ENCODE measurements at regions of chr15 and their contacts with region 1.

Region 1: DNA sequence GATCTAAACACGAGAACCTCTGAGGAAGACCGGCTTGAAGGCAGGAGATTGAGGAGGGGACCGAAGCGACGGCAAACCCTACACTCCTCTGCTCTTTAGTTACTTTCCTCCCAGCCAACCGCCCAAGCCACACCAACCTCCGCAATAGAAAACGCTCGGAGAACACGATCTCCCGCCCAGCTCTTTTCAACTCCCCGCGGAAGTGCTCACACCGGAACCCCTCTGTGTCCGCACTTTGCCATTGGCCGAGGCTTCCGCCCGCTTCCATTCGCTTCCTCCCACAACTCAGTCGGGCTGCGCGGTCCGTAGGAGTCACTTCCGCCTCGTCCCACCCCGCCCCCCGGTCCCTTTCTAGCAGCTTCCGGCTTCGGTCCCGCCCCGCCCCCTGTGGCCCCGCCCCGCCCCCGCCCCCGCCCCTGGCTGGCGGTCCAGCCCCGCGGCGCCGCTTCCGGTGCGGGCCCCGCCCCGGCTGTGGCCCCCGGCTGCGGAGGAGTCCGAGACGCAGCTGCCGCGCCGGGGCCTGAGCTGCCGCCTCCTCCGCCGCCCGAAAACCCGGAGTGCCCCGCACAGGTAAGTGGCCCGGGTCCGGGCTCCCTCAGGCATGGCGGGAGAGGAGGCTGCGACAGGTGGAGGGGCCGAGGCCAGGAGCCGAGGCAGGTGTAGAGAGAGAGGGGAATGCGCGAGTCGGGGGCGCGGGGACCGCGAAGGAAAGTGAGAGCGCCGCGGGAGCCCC is at the start of gene ARID3B:
- DNase-seq: peak; percentile 89 to 98 (median 95)
- ATAC-seq: peak; percentile 82
- H3K4me3 ChIP-seq: peak within 1 kb of the TSS; percentile 88
- H3K4me3 Mint-ChIP-seq: peak within 1 kb of the TSS; percentile 99
- H3K27ac ChIP-seq: peak within 1 kb of the TSS; percentile 66 to 81
- H3K27ac Mint-ChIP-seq: peak within 1 kb of the TSS; percentile 98
- H3K4me1 ChIP-seq: peaks cover 39% of the 10 kb centered on the region
- H3K4me1 Mint-ChIP-seq: peaks cover 55% of the 10 kb centered on the region
- H3K27me3 ChIP-seq: no peaks in the 10 kb centered on the region
- H3K27me3 Mint-ChIP-seq: no peaks in the 10 kb centered on the region
- CTCF ChIP-seq: no peak
- total RNA-seq, gene ARID3B: 35.2 to 38.7 TPM

Region 2: GRCh38 chr15:73991726-73992593 is 549.0 kb before region 1 on chr15 and contains the start of gene STOML1:
- CTCF ChIA-PET with region 1: no interaction called
- POLR2A ChIA-PET with region 1: no interaction called
- intact Hi-C with region 1: loop called (anchors 2 to 10 kb)
- DNase-seq: peak; percentile 88 to 97 (median 96)
- ATAC-seq: peak; percentile 79
- H3K4me3 ChIP-seq: peak within 1 kb of the TSS; percentile 62 to 88
- H3K4me3 Mint-ChIP-seq: peak within 1 kb of the TSS; percentile 100
- H3K27ac ChIP-seq: peak within 1 kb of the TSS; percentile 53
- H3K27ac Mint-ChIP-seq: peak within 1 kb of the TSS; percentile 73
- H3K4me1 ChIP-seq: peaks cover 42% of the 10 kb centered on the region
- H3K4me1 Mint-ChIP-seq: peaks cover 48% of the 10 kb centered on the region
- H3K27me3 ChIP-seq: no peaks in the 10 kb centered on the region
- H3K27me3 Mint-ChIP-seq: no peaks in the 10 kb centered on the region
- CTCF ChIP-seq: peak; percentile 95
- total RNA-seq, gene STOML1: 2.5 to 4.8 TPM

Region 3: GRCh38 chr15:74433592-74434262 is 107.2 kb before region 1 on chr15 and contains the start of gene SEMA7A:
- CTCF ChIA-PET with region 1: interaction called, 4 read pairs
- POLR2A ChIA-PET with region 1: no interaction called
- intact Hi-C with region 1: loop called in 1 of 2 experiments (anchors 1 kb)
- DNase-seq: peak; percentile 49 to 91 (median 72)
- ATAC-seq: peak; percentile 81
- H3K4me3 ChIP-seq: peak within 1 kb of the TSS; percentile 56 to 68
- H3K4me3 Mint-ChIP-seq: peak within 1 kb of the TSS; percentile 80
- H3K27ac ChIP-seq: peak within 1 kb of the TSS; percentile 23 to 73
- H3K27ac Mint-ChIP-seq: peak within 1 kb of the TSS; percentile 57
- H3K4me1 ChIP-seq: peaks cover 16% of the 10 kb centered on the region
- H3K4me1 Mint-ChIP-seq: peaks cover 40% of the 10 kb centered on the region
- H3K27me3 ChIP-seq: no peaks in the 10 kb centered on the region
- H3K27me3 Mint-ChIP-seq: no peaks in the 10 kb centered on the region
- CTCF ChIP-seq: no peak
- total RNA-seq, gene SEMA7A: 8.8 to 9.4 TPM

Region 4: DNA sequence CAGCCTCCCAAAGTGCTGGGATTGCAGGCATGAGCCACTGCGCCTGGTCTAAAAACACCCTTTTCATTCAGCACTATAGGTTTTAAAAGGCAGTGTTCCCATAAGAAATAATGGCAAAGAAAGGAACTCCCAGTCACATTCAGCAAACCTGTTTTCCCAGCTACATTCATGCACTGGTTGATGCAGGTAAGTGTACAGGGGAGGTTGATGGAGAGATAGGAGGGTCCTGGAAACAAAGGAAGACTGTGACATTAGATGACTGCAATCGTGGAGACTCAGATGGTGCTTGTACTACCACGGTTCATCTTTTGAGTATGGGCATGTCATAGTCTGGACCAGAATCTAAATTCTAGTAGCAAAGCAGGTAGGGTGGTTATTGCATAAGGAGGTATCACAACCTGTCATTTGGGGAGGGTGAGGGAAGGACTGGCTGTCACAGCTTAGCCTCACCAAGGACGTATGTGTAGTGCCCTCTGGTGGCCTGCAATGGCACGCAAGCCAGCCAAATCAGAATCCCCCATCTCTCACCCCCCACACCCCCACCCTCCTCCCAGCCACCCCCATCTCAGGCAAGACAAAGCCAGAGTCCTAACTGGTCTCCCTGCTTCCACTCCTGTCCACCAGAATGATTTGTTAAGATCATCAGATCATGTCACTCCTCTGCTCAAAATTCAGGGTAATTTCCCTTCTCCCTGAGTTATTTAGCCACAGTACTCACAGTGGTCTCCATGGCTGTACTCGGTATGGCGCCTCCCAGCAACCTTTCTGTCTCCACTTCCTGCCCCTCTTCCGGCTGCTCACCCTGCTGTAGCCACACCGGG is 51.2 kb before region 1 on chr15:
- CTCF ChIA-PET with region 1: interaction called, 4 read pairs
- POLR2A ChIA-PET with region 1: no interaction called
- intact Hi-C with region 1: loop called in 1 of 2 experiments (anchors 5 kb)
- DNase-seq: peak; percentile 58 to 90 (median 79)
- ATAC-seq: peak; percentile 93
- H3K4me3 ChIP-seq: peak overlapping the region; percentile 14 to 18
- H3K4me3 Mint-ChIP-seq: peak overlapping the region; percentile 65
- H3K27ac ChIP-seq: peak overlapping the region in 1 of 2 experiments; percentile 55
- H3K27ac Mint-ChIP-seq: peak overlapping the region; percentile 83
- H3K4me1 ChIP-seq: peaks cover 19% of the 10 kb centered on the region
- H3K4me1 Mint-ChIP-seq: peaks cover 22% of the 10 kb centered on the region
- H3K27me3 ChIP-seq: no peaks in the 10 kb centered on the region
- H3K27me3 Mint-ChIP-seq: no peaks in the 10 kb centered on the region
- CTCF ChIP-seq: peak; percentile 59

Region 5: GRCh38 chr15:74695597-74696397 is 154.9 kb after region 1 on chr15 and contains the start of gene EDC3:
- CTCF ChIA-PET with region 1: no interaction called
- POLR2A ChIA-PET with region 1: no interaction called
- intact Hi-C with region 1: loop called (anchors 1 to 2 kb)
- DNase-seq: peak; percentile 72 to 94 (median 89)
- ATAC-seq: peak; percentile 88
- H3K4me3 ChIP-seq: peak within 1 kb of the TSS; percentile 79 to 93
- H3K4me3 Mint-ChIP-seq: peak within 1 kb of the TSS; percentile 100
- H3K27ac ChIP-seq: peak within 1 kb of the TSS; percentile 80 to 83
- H3K27ac Mint-ChIP-seq: peak within 1 kb of the TSS; percentile 99
- H3K4me1 ChIP-seq: peaks cover 14% of the 10 kb centered on the region
- H3K4me1 Mint-ChIP-seq: peaks cover 47% of the 10 kb centered on the region
- H3K27me3 ChIP-seq: peaks cover 0 to 1% of the 10 kb centered on the region in 2 experiments
- H3K27me3 Mint-ChIP-seq: no peaks in the 10 kb centered on the region
- CTCF ChIP-seq: no peak
- total RNA-seq, gene EDC3: 9.8 to 11.8 TPM

Region 6: GRCh38 chr15:74776821-74777768 is 236.2 kb after region 1 on chr15:
- CTCF ChIA-PET with region 1: no interaction called
- POLR2A ChIA-PET with region 1: no interaction called
- intact Hi-C with region 1: no loop called
- DNase-seq: peak in 7 of 9 experiments; percentile 50 to 93 (median 70)
- ATAC-seq: peak; percentile 22
- H3K4me3 ChIP-seq: peak overlapping the region; percentile 9 to 31
- H3K4me3 Mint-ChIP-seq: peak overlapping the region; percentile 77
- H3K27ac ChIP-seq: peak overlapping the region; percentile 43 to 92
- H3K27ac Mint-ChIP-seq: peak overlapping the region; percentile 92
- H3K4me1 ChIP-seq: peaks cover 77% of the 10 kb centered on the region
- H3K4me1 Mint-ChIP-seq: peaks cover 72% of the 10 kb centered on the region
- H3K27me3 ChIP-seq: no peaks in the 10 kb centered on the region
- H3K27me3 Mint-ChIP-seq: no peaks in the 10 kb centered on the region
- CTCF ChIP-seq: no peak

Region 7: DNA sequence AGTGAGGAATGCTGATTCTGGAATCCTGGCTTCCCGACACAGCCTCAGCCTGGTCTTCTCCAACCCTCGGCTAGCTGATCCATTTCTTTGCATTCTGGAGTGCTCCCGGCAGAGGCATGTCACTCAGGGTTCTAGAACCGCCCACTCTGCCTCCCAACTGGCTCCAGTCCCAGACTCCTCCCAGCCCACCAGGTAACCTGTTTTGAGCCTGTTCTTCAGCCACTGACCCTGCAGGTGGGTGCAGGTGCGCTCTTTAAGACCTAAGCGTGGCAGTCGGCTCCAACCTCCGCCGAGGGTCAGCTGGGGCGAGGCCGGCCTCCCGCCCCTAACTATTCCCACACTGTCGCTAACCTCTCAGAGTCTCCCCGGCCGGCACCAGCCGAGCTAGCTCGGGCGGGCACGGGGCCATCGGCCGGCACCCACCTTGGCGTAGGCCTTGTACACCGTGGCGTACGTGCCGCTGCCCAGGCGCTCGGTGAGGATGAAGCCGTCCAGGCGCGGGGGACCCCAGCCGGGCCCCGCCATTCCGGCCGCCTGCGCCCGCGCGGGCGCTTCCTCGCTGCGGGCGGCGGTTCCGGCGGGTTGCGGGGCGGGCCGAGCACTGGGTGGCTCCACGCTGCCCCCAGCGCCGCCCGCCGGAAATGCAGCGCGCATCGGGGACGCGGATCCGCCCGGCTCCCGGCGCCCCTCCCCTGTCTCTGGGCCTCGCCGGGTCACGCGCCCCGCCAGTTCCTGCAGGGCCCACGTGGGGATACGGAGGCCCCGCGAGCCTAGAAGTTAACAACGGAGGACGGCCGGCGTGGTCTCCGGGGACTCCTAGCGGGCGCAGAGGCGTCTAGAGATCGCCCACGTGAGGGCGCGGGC is 301.9 kb after region 1 on chr15 and contains the start of gene ULK3:
- CTCF ChIA-PET with region 1: no interaction called
- POLR2A ChIA-PET with region 1: no interaction called
- intact Hi-C with region 1: loop called in 1 of 2 experiments (anchors 1 kb)
- DNase-seq: peak; percentile 88 to 96 (median 92)
- ATAC-seq: peak; percentile 92
- H3K4me3 ChIP-seq: peak within 1 kb of the TSS; percentile 90 to 97
- H3K4me3 Mint-ChIP-seq: peak within 1 kb of the TSS; percentile 91
- H3K27ac ChIP-seq: peak within 1 kb of the TSS; percentile 72 to 78
- H3K27ac Mint-ChIP-seq: peak within 1 kb of the TSS; percentile 93
- H3K4me1 ChIP-seq: peaks cover 43% of the 10 kb centered on the region
- H3K4me1 Mint-ChIP-seq: peaks cover 48% of the 10 kb centered on the region
- H3K27me3 ChIP-seq: no peaks in the 10 kb centered on the region
- H3K27me3 Mint-ChIP-seq: no peaks in the 10 kb centered on the region
- CTCF ChIP-seq: peak; percentile 71
- total RNA-seq, gene ULK3: 34.3 to 35.1 TPM

Region 8: DNA sequence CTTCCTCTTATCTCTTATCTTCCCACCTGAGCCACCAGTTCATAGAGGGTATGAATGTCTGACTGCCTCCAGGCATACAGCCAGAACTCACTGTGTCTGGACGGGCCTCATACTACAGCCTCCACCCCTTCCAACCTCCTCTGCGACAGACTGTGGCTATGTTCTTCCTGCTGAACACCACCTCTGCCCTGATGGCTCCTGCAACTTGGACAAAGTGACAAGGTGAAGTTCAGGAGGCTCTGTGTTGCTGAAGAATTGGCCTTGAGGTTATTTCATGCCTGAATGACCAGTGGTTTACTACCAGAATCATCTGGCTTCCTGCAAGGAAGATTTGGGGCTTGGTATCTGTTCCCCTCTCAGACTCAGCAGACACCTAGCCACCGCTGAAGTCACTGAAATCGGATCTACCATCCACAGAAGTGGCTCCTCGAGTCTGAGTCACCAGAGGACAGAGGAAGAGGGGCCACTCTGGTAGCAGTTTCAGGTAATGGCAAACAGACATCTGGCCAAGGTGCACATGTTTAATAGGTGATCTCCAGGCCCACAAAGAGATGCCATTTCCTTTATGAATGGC is 316.2 kb after region 1 on chr15:
- CTCF ChIA-PET with region 1: no interaction called
- POLR2A ChIA-PET with region 1: no interaction called
- intact Hi-C with region 1: no loop called
- DNase-seq: no peak
- ATAC-seq: peak; percentile 40
- H3K4me3 ChIP-seq: no peak overlapping the region
- H3K4me3 Mint-ChIP-seq: no peak overlapping the region
- H3K27ac ChIP-seq: peak overlapping the region; percentile 9 to 31
- H3K27ac Mint-ChIP-seq: peak overlapping the region; percentile 72
- H3K4me1 ChIP-seq: peaks cover 35% of the 10 kb centered on the region
- H3K4me1 Mint-ChIP-seq: peaks cover 40% of the 10 kb centered on the region
- H3K27me3 ChIP-seq: no peaks in the 10 kb centered on the region
- H3K27me3 Mint-ChIP-seq: no peaks in the 10 kb centered on the region
- CTCF ChIP-seq: no peak

Region 9: DNA sequence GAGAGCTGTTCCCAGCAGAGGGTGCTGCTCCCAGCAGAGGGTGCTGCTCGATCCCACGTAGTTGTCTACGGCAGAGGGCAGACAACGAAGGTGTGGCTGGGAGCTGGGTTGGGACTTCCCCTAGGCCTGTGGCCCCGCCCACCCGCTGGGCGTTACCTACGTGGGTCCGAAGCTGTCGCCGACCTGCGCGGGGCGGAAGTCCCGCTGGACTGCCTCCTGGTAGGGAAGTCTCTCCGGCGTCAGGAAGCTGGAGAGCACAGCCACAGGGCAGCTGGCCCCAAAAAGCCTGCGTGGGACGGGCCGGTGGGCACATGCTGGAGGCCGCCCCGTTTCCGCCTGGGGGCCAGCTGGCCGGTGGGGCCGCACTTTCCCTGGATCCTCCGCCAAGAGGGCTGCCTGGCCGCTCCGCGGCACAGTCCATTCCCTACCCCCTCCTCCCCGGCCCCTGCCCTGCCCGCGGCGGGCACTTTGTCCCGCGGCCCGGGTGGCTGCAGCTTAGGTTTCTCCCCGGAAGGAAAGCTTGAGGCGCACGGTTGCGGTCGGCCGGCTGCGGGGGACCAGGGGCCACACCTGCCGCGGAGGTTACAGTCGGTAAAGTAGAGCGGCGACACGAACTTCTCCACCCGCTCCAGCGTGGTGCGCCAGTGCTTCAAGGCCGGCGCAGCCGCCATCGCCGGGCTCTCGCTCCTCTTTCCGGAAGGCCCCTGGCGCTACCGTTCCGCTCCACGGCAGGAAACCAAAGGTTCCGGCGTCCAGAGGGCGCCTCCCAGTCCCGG is 827.2 kb after region 1 on chr15 and contains the start of gene MAN2C1:
- CTCF ChIA-PET with region 1: no interaction called
- POLR2A ChIA-PET with region 1: no interaction called
- intact Hi-C with region 1: loop called in 1 of 2 experiments (anchors 5 kb)
- DNase-seq: peak; percentile 76 to 97 (median 91)
- ATAC-seq: peak; percentile 97
- H3K4me3 ChIP-seq: peak within 1 kb of the TSS; percentile 86 to 97
- H3K4me3 Mint-ChIP-seq: peak within 1 kb of the TSS; percentile 91
- H3K27ac ChIP-seq: peak within 1 kb of the TSS; percentile 89 to 96
- H3K27ac Mint-ChIP-seq: peak within 1 kb of the TSS; percentile 94
- H3K4me1 ChIP-seq: peaks cover 15% of the 10 kb centered on the region
- H3K4me1 Mint-ChIP-seq: peaks cover 24% of the 10 kb centered on the region
- H3K27me3 ChIP-seq: no peaks in the 10 kb centered on the region
- H3K27me3 Mint-ChIP-seq: no peaks in the 10 kb centered on the region
- CTCF ChIP-seq: no peak
- total RNA-seq, gene MAN2C1: 342 to 373 TPM